Posterior cingulate gyrus (tissue), 11 donors: ENCODE measurements at regions of chr4 and their contacts with region 1.

Region 1: GRCh38 chr4:145936142-145936996 is 2.3 kb downstream of the ZNF827 start:
- DNase-seq: peak; percentile 39 to 93 (median 60)

Region 2: GRCh38 chr4:145887241-145887991 is 49.0 kb before region 1 on chr4:
- intact Hi-C with region 1: loop called (anchors 10 kb)
- DNase-seq: peak in 2 of 10 donors; percentile 39 to 45

Region 3: DNA sequence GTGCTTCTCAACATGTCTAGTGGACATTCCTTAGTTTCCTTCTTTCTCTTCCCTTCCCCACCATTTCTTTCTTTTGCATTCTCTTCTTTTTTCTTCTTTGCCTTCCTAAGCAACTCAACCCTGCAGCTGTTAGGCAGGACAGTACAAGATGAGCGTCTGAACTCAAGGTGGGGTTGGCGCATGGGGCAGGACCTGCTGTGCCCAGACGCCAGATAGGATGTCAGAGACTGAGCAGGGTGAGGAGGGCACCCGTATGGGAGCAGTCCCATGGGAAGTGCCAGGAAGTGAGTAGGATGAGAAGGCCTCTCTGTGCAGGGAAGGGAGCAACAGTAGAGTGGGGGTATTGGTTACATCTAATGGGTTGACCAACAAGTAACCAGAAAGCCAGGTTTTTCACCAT is 40.3 kb after region 1 on chr4:
- intact Hi-C with region 1: no loop called
- DNase-seq: peak in 1 of 10 donors; percentile 62

Region 4: GRCh38 chr4:146175541-146176453 is 239.4 kb after region 1 on chr4 and contains the start of gene LSM6:
- intact Hi-C with region 1: loop called (anchors 5 kb)
- DNase-seq: peak; percentile 89 to 98 (median 93)

Region 5: DNA sequence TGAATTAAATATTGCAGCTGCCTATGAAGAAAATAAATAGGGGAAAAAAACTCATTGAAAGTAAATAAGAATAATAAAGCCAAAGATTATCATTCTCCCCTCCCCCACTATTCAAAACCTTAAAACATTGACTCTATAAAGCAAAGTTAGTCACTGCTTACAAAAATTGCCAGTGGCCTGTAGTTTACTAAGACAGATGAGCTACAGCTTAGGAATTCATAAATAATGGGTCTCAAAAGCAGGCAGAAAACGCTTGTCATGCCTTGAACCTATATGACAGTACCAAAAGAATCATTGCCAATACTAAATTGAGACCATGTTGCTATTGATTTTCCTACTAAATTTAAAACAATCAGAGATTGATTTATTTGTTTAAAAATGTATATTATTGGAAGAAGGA is 506.4 kb after region 1 on chr4:
- intact Hi-C with region 1: no loop called
- DNase-seq: no peak